Aorta (tissue), 5 donors: ENCODE measurements at regions of chr9 and their contacts with region 1.

Region 1: GRCh38 chr9:110623462-110624025 is 44.0 kb upstream of the SVEP1 start:
- DNase-seq: no peak
- ATAC-seq: peak; percentile 64
- H3K4me3 ChIP-seq: no peak overlapping the region
- H3K27ac ChIP-seq: no peak overlapping the region
- H3K4me1 ChIP-seq: peaks cover 0 to 6% of the 10 kb centered on the region in 2 donors
- H3K27me3 ChIP-seq: no peaks in the 10 kb centered on the region

Region 2: GRCh38 chr9:110452227-110452801 is 171.2 kb before region 1 on chr9:
- intact Hi-C with region 1: loop called (anchors 2 kb)
- DNase-seq: no peak
- ATAC-seq: no peak
- H3K4me3 ChIP-seq: no peak overlapping the region
- H3K27ac ChIP-seq: no peak overlapping the region
- H3K4me1 ChIP-seq: no peaks in the 10 kb centered on the region
- H3K27me3 ChIP-seq: no peaks in the 10 kb centered on the region